Common myeloid progenitor, CD34-positive (primary cell): ENCODE measurements at regions of chr20 and their contacts with region 1.

Region 1: GRCh38 chr20:51562332-51563155 is 20.0 kb upstream of the NFATC2 start:
- DNase-seq: peak in 2 of 3 donors; percentile 24 to 53
- H3K4me3 ChIP-seq: peak overlapping the region in 6 of 7 experiments; percentile 51 to 78 (median 68)
- H3K27ac ChIP-seq: no peak overlapping the region
- H3K4me1 ChIP-seq: peaks cover 0 to 33% (median 25%) of the 10 kb centered on the region in 4 experiments
- H3K27me3 ChIP-seq: peaks cover 8 to 58% (median 34%) of the 10 kb centered on the region in 5 experiments

Region 2: GRCh38 chr20:51345601-51346101 is 216.9 kb before region 1 on chr20:
- CTCF ChIA-PET with region 1: no interaction called
- POLR2A ChIA-PET with region 1: no interaction called
- DNase-seq: no peak
- H3K4me3 ChIP-seq: no peak overlapping the region
- H3K27ac ChIP-seq: no peak overlapping the region
- H3K4me1 ChIP-seq: no peaks in the 10 kb centered on the region
- H3K27me3 ChIP-seq: peaks cover 0 to 2% (median 0%) of the 10 kb centered on the region in 5 experiments

Region 3: GRCh38 chr20:51480507-51481270 is 81.9 kb before region 1 on chr20:
- CTCF ChIA-PET with region 1: no interaction called
- POLR2A ChIA-PET with region 1: no interaction called
- DNase-seq: no peak
- H3K4me3 ChIP-seq: no peak overlapping the region
- H3K27ac ChIP-seq: no peak overlapping the region
- H3K4me1 ChIP-seq: peaks cover 0 to 15% (median 15%) of the 10 kb centered on the region in 4 experiments
- H3K27me3 ChIP-seq: no peaks in the 10 kb centered on the region

Region 4: DNA sequence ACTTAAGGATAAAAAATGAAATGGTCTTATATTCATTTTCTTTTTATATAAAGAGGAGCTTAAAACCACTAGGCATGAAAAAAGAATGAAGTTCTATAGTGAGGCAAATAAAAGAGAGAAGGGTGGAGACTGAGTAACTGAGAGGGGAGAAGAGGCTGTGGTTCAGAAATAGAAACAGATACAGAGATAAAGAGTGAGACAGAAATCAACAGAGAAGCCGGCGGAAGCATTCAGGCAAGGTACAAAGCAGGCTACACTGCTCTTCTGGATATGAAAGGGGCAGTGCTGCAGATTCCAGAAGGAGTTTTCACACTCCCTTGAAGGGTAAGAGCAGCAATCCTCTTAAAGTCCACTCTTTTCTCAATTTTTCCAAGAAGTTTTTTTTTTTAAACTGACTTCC is 49.9 kb before region 1 on chr20:
- CTCF ChIA-PET with region 1: no interaction called
- POLR2A ChIA-PET with region 1: no interaction called
- DNase-seq: no peak
- H3K4me3 ChIP-seq: no peak overlapping the region
- H3K27ac ChIP-seq: peak overlapping the region in 1 of 2 experiments; percentile 26
- H3K4me1 ChIP-seq: peaks cover 2 to 19% (median 10%) of the 10 kb centered on the region in 4 experiments
- H3K27me3 ChIP-seq: no peaks in the 10 kb centered on the region

Region 5: GRCh38 chr20:51573576-51574243 is 11.2 kb after region 1 on chr20:
- CTCF ChIA-PET with region 1: interaction called, 10 read pairs
- POLR2A ChIA-PET with region 1: no interaction called
- DNase-seq: no peak
- H3K4me3 ChIP-seq: no peak overlapping the region
- H3K27ac ChIP-seq: no peak overlapping the region
- H3K4me1 ChIP-seq: peaks cover 0 to 4% (median under 1%) of the 10 kb centered on the region in 4 experiments
- H3K27me3 ChIP-seq: no peaks in the 10 kb centered on the region

Region 6: GRCh38 chr20:51586005-51586440 is 23.5 kb after region 1 on chr20:
- CTCF ChIA-PET with region 1: interaction called, 10 read pairs
- POLR2A ChIA-PET with region 1: no interaction called
- DNase-seq: no peak
- H3K4me3 ChIP-seq: no peak overlapping the region
- H3K27ac ChIP-seq: no peak overlapping the region
- H3K4me1 ChIP-seq: peaks cover 0 to 5% (median 2%) of the 10 kb centered on the region in 4 experiments
- H3K27me3 ChIP-seq: no peaks in the 10 kb centered on the region